ENCODE measurements at regions of chr14 and their contacts with region 1.

Region 1: GRCh38 chr14:23320774-23321571 is at the start of gene PABPN1:
- DNase-seq: peak; percentile 99
- H3K4me3 ChIP-seq: peak within 1 kb of the TSS; percentile 82
- CTCF ChIP-seq: no peak

Region 2: DNA sequence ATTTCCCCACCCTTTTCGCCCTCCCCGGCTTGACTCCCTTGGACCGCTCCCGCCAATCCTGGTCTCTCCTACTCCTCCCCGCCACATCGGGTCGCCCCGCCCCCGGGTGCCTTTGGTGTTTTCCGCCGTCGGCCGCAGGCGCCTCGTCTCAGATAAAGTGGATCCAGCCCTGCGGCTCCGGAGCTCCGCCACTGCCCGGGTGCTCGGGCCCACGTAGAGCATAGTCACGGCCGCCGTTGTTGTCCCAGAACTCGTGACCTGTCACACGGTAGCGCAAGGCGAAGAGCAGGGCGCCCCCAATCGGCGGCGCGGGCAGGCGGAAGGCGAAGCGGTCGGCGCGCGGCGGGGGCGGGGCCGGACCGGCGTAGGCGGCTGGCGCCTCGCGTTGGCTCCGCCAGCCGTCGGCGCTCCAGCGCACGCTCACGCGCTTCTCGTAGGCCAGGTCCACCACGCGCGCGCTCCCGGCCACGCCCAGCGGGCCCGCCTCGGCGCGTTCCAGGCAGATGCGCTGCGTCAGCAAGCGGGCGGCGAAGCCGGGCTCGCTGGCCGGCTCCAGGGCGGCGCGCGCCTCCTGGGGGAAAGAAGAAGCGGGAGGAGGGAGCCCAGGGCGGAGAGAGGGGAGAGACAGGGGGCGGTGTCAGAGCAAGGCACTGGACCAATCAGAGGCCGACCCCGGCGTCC is 19.5 kb before region 1 on chr14:
- CTCF ChIA-PET with region 1: interaction called, 30 read pairs
- POLR2A ChIA-PET with region 1: interaction called, 34 read pairs
- DNase-seq: peak; percentile 78
- H3K4me3 ChIP-seq: peak overlapping the region; percentile 74
- CTCF ChIP-seq: peak; percentile 81

Region 3: GRCh38 chr14:23345987-23346692 is 25.2 kb after region 1 on chr14:
- CTCF ChIA-PET with region 1: interaction called, 12 read pairs
- POLR2A ChIA-PET with region 1: interaction called, 3 read pairs
- DNase-seq: no peak
- H3K4me3 ChIP-seq: no peak overlapping the region
- CTCF ChIP-seq: no peak

Region 4: GRCh38 chr14:23366426-23366921 is 45.5 kb after region 1 on chr14:
- CTCF ChIA-PET with region 1: interaction called, 34 read pairs
- POLR2A ChIA-PET with region 1: interaction called, 11 read pairs
- DNase-seq: no peak
- H3K4me3 ChIP-seq: peak overlapping the region; percentile 74
- CTCF ChIP-seq: no peak

Measured in AG04449 (cell line).